ENCODE measurements at regions of chr19 and their contacts with region 1.

Region 1: GRCh38 chr19:30253581-30253996 is 118.6 kb upstream of the ZNF536 start:
- DNase-seq: peak in 1 of 2 donors; percentile 70
- H3K4me3 ChIP-seq: no peak overlapping the region
- CTCF ChIP-seq: no peak
- POLR2A ChIP-seq: no peak

Region 2: DNA sequence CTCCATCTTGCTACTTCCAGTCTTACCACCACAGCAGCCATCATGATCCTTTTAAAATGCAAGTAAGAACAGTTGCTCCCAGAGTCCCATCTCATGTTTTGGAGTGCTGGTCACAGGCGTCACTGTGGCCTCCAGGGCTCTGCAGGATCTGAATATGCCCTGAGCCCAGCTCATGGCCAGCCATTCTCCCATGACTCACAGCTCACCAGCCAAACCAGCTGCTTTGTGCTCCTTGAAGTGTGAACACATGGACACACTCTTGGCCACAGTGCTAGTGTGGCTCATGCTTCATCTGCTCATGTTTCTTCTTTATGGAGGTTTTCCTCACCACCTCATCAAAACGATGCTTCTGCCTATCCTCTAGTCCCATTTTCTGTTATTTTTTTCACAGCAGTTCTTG is 1507.1 kb before region 1 on chr19:
- intact Hi-C with region 1: loop called (anchors 10 kb)
- DNase-seq: no peak
- H3K4me3 ChIP-seq: no peak overlapping the region
- CTCF ChIP-seq: no peak
- POLR2A ChIP-seq: no peak